Astrocyte of the cerebellum (primary cell): ENCODE measurements at regions of chr10 and their contacts with region 1.

Region 1: DNA sequence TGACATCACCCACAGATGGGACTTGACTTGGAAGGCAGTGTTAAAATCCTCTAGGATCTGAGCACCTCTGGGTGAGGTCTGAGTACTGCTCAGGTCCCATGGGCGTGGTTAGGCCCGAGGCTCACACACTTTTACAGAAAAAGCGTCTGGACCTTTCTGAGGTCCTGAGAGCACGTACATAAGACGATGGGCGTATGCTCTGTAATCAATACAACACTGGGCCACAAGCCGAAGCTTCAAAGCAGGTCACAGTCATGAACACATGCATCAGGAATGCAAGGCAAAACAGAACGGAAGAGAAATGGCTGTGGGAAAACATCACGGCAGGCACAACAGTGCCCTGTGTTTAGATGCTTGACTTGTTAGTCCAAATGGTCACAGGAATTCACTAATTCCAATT is 112.2 kb downstream of the LARP4B start:
- DNase-seq: peak; percentile 28
- H3K4me3 ChIP-seq: no peak overlapping the region
- CTCF ChIP-seq: no peak

Region 2: DNA sequence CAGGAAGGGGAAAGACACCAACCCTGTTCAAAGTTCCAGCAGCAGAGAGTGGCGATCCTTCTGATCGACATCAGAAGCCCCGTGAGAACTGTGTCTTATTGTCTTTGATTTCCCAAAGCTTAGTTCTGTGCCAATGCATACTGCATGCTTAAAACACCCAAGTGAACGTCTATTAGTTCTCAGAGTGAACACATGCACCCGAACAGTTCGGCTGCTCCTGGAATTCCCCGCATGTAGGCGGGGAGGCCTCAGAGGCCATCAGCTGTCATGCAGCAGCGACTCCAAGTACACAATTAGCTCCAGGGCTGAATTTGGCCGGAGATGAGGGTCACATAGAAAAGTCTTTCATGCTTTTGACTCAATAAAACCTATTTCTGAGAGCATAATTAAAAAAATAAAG is 407.2 kb before region 1 on chr10:
- in situ Hi-C with region 1: loop called (anchors 5 kb)
- DNase-seq: no peak
- H3K4me3 ChIP-seq: no peak overlapping the region
- CTCF ChIP-seq: no peak

Region 3: GRCh38 chr10:509361-510102 is 309.8 kb before region 1 on chr10:
- in situ Hi-C with region 1: loop called (anchors 5 kb)
- DNase-seq: no peak
- H3K4me3 ChIP-seq: no peak overlapping the region
- CTCF ChIP-seq: no peak

Region 4: DNA sequence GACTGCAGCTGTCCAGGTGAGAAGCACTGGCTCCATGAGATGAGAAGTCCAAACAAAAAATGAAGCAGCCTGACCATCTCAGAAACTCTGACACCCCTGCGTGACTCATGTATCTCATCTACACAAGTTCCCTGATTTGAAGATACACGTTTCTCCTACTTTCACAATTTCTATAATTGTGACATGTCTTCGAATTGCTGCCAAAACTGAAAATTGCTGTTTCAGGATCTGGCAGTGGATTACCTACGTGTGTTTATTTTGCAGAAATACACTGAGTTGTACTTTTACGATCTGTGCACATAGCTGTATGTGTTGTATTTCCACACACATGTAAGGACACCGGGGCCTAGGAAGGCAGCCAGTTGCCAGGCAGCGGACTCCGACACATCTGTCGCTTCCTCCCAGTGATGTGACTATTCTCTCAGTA is 59.0 kb after region 1 on chr10:
- in situ Hi-C with region 1: no loop called
- DNase-seq: no peak
- H3K4me3 ChIP-seq: no peak overlapping the region
- CTCF ChIP-seq: no peak